Breast epithelium (tissue), 4 donors: ENCODE measurements at regions of chr7 and their contacts with region 1.

Region 1: DNA sequence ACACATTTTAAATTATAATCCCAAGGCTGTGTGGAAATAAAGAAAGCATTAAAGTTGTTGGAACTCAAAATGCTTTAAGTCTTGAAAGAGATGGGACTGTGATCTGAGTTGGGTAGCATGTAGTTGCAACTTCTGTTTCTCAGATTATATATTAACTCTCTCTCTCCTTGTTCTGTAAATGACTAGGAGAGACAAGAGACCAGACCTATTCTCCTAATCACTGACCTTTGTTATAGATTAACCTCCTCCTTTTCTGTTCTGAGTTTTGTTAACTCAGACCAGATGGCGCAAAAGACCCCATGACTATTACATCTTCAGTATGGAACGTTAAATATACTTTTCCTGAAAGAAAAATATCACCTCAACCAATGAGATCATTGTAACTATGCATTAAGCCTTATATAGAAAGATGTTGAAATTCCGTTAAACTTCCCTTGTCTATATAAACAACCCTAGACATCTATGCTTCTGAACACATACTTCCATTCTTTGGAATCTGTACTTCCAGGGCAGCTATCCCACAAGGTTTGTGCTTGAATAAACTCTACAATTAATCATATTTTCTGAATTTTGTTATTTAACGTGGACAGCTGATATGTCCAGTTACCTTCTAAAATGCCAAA is 143.5 kb upstream of the TRIM24 start:
- DNase-seq: no peak
- H3K4me3 ChIP-seq: no peak overlapping the region
- H3K27ac ChIP-seq: no peak overlapping the region
- H3K4me1 ChIP-seq: no peaks in the 10 kb centered on the region
- H3K27me3 ChIP-seq: no peaks in the 10 kb centered on the region
- CTCF ChIP-seq: no peak
- POLR2A ChIP-seq: no peak

Region 2: DNA sequence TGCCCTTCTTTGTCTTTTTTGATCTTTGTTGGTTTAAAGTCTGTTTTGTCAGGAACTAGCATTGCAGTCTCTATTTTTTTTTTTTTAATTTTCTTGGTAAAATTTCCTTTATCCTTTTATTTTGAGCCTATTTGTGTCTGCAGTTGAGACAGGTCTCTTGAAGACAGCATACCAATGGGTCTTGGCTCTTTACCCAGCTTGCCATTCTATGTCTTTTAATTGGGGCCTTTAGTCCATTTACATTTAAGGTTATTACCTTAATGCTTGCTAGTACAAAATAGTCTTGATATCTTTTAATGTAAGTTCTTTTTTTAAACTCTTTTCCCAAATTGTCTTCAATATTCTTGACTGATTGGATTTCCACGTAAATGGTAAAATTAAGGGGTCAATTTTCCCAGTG is 1846.4 kb before region 1 on chr7:
- intact Hi-C with region 1: no loop called
- DNase-seq: no peak
- H3K4me3 ChIP-seq: no peak overlapping the region
- H3K27ac ChIP-seq: no peak overlapping the region
- H3K4me1 ChIP-seq: no peaks in the 10 kb centered on the region
- H3K27me3 ChIP-seq: no peaks in the 10 kb centered on the region
- CTCF ChIP-seq: no peak
- POLR2A ChIP-seq: no peak

Region 3: GRCh38 chr7:137731436-137731835 is 585.1 kb before region 1 on chr7:
- intact Hi-C with region 1: loop called (anchors 5 kb)
- DNase-seq: no peak
- H3K4me3 ChIP-seq: no peak overlapping the region
- H3K27ac ChIP-seq: no peak overlapping the region
- H3K4me1 ChIP-seq: no peaks in the 10 kb centered on the region
- H3K27me3 ChIP-seq: no peaks in the 10 kb centered on the region
- CTCF ChIP-seq: no peak
- POLR2A ChIP-seq: no peak

Region 4: GRCh38 chr7:138295049-138295637 is 21.4 kb before region 1 on chr7:
- intact Hi-C with region 1: no loop called
- DNase-seq: no peak
- H3K4me3 ChIP-seq: no peak overlapping the region
- H3K27ac ChIP-seq: no peak overlapping the region
- H3K4me1 ChIP-seq: no peaks in the 10 kb centered on the region
- H3K27me3 ChIP-seq: no peaks in the 10 kb centered on the region
- CTCF ChIP-seq: no peak
- POLR2A ChIP-seq: no peak

Region 5: DNA sequence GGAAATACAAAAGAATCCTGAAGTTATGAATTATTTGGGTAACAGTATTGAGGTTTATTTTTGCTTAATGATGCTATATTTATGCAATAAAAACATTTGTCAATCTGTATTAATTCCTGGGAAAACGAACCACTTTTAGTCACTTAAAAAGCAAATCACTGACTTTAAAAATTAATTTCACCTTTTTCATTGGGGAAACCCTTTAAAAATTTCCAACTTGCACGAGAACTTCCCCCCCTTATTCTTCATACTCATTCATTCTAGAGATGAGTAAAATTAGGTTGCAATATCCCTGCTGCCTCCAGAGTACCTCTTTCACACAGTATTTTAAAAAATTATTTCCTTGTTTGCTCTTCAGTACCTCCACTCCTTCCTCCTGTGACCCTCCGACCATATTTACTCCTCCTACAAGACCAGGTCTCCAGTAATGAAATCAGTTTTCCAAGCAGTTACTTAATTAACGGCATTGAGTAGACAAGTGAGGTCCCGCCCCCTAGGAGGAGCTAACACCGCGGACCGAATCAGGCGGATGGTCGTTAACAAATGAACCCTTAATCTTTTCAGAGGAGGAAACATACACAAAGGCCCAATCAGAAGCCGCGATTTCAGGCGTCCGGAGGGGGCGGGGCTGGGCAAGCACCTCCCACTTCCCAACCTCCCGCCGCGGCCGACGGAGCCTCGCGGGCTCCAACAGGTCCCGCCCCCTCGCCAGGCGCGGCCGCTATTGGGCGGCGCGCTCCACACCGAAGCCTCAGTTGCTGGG is 143.1 kb after region 1 on chr7:
- intact Hi-C with region 1: no loop called
- DNase-seq: peak in 1 of 2 donors; percentile 97
- H3K4me3 ChIP-seq: peak overlapping the region; percentile 83 to 92 (median 91)
- H3K27ac ChIP-seq: peak overlapping the region; percentile 27 to 93
- H3K4me1 ChIP-seq: no peaks in the 10 kb centered on the region
- H3K27me3 ChIP-seq: no peaks in the 10 kb centered on the region
- CTCF ChIP-seq: peak; percentile 49 to 63 (median 62)
- POLR2A ChIP-seq: no peak